ENCODE measurements at regions of chr1 and their contacts with region 1.

Region 1: DNA sequence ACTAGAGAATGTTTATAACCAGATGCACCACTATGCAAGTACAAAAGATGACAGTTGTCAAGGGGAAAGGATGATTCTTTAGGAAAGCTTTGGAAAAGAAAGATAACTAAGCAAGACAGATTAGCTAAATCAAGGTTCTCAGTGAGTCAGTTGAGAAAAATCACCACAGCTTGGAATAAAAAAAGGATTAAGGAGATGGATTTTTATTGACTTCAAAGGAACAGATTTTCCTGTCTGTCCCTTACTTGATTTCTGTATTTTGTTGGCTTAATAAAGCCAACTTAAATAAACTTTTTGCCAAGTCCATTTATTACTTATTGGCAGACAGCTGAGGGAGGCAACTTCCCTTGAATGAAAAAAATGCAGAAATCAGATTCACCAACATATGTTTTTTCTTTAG is 93.9 kb downstream of the NR5A2 start:
- DNase-seq: no peak
- H3K4me3 ChIP-seq: no peak overlapping the region
- H3K27ac ChIP-seq: no peak overlapping the region
- H3K4me1 ChIP-seq: no peaks in the 10 kb centered on the region
- H3K27me3 ChIP-seq: peaks cover 3% of the 10 kb centered on the region
- CTCF ChIP-seq: no peak

Region 2: GRCh38 chr1:200015811-200016210 is 105.6 kb before region 1 on chr1:
- CTCF ChIA-PET with region 1: no interaction called
- dilution Hi-C with region 1: loop called (anchors 5 kb)
- in situ Hi-C with region 1: no loop called
- intact Hi-C with region 1: no loop called
- DNase-seq: no peak
- H3K4me3 ChIP-seq: no peak overlapping the region
- H3K27ac ChIP-seq: no peak overlapping the region
- H3K4me1 ChIP-seq: no peaks in the 10 kb centered on the region
- H3K27me3 ChIP-seq: peaks cover 5% of the 10 kb centered on the region
- CTCF ChIP-seq: no peak